T-cell (primary cell): ENCODE measurements at regions of chrX and their contacts with region 1.

Region 1: GRCh38 chrX:30812326-30812725 is 76.7 kb downstream of the TAB3 start:
- DNase-seq: no peak
- ATAC-seq: no peak
- H3K4me3 ChIP-seq: no peak overlapping the region
- H3K4me3 Mint-ChIP-seq: no peak overlapping the region
- H3K27ac ChIP-seq: no peak overlapping the region
- H3K27ac Mint-ChIP-seq: no peak overlapping the region
- H3K4me1 ChIP-seq: no peaks in the 10 kb centered on the region
- H3K4me1 Mint-ChIP-seq: no peaks in the 10 kb centered on the region
- H3K27me3 ChIP-seq: no peaks in the 10 kb centered on the region
- H3K27me3 Mint-ChIP-seq: peaks cover 0 to 6% of the 10 kb centered on the region in 2 donors

Region 2: DNA sequence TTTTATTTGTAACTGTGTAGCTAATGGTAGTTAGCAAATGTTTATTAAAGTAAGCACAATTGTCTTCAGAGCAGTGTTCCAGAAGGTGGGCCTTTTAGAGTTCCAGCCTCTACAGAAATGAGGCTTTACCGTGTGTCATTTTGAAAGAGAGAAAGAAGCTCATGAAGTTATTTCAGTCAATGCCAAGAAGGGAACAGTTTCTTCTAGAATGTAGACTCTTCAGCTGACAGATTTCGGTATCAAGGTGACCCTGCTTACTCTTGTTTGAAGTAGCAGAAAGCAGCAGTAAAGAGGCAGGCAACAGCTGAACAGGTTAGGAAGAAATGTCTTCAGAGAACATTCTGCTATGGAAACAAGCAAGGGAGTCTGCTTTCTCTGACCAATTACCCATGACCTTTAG is 328.3 kb before region 1 on chrX:
- CTCF ChIA-PET with region 1: no interaction called
- POLR2A ChIA-PET with region 1: no interaction called
- DNase-seq: no peak
- ATAC-seq: no peak
- H3K4me3 ChIP-seq: no peak overlapping the region
- H3K4me3 Mint-ChIP-seq: no peak overlapping the region
- H3K27ac ChIP-seq: no peak overlapping the region
- H3K27ac Mint-ChIP-seq: no peak overlapping the region
- H3K4me1 ChIP-seq: no peaks in the 10 kb centered on the region
- H3K4me1 Mint-ChIP-seq: no peaks in the 10 kb centered on the region
- H3K27me3 ChIP-seq: no peaks in the 10 kb centered on the region
- H3K27me3 Mint-ChIP-seq: peaks cover 0 to 4% of the 10 kb centered on the region in 2 donors

Region 3: DNA sequence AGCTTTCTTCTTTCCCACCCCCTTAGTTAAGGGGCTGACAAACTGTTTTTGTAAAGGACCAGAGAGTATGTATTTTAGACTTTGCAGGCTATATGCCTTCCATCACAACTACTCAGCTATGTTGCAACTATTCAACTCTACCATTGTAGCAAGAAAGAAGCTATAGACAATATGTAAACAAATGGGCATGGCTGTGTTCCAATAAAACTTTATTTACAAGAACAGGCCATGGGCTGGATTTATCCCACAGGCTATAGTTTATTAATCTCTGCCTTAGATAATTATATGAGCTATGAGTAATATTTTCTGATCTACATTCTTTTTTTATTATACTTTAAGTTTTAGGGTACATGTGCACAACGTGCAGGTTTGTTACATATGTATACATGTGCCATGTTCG is 44.9 kb before region 1 on chrX:
- CTCF ChIA-PET with region 1: no interaction called
- POLR2A ChIA-PET with region 1: no interaction called
- DNase-seq: no peak
- ATAC-seq: no peak
- H3K4me3 ChIP-seq: no peak overlapping the region
- H3K4me3 Mint-ChIP-seq: no peak overlapping the region
- H3K27ac ChIP-seq: no peak overlapping the region
- H3K27ac Mint-ChIP-seq: no peak overlapping the region
- H3K4me1 ChIP-seq: no peaks in the 10 kb centered on the region
- H3K4me1 Mint-ChIP-seq: no peaks in the 10 kb centered on the region
- H3K27me3 ChIP-seq: no peaks in the 10 kb centered on the region
- H3K27me3 Mint-ChIP-seq: no peaks in the 10 kb centered on the region

Region 4: GRCh38 chrX:30971774-30972603 is 159.7 kb after region 1 on chrX:
- CTCF ChIA-PET with region 1: interaction called in 1 of 2 experiments, 21 read pairs
- POLR2A ChIA-PET with region 1: no interaction called
- DNase-seq: peak in 14 of 35 experiments; percentile 0 to 36 (median 2)
- ATAC-seq: peak; percentile 61 to 76 (median 62)
- H3K4me3 ChIP-seq: peak overlapping the region in 1 of 2 donors; percentile 10
- H3K4me3 Mint-ChIP-seq: peak overlapping the region; percentile 59 to 67 (median 64)
- H3K27ac ChIP-seq: no peak overlapping the region
- H3K27ac Mint-ChIP-seq: no peak overlapping the region
- H3K4me1 ChIP-seq: peaks cover 0 to 2% of the 10 kb centered on the region in 2 experiments
- H3K4me1 Mint-ChIP-seq: peaks cover 4 to 16% (median 16%) of the 10 kb centered on the region in 3 donors
- H3K27me3 ChIP-seq: no peaks in the 10 kb centered on the region
- H3K27me3 Mint-ChIP-seq: peaks cover 0 to 7% of the 10 kb centered on the region in 2 donors